Sigmoid colon (tissue), 7 donors: ENCODE measurements at regions of chr2 and their contacts with region 1.

Region 1: DNA sequence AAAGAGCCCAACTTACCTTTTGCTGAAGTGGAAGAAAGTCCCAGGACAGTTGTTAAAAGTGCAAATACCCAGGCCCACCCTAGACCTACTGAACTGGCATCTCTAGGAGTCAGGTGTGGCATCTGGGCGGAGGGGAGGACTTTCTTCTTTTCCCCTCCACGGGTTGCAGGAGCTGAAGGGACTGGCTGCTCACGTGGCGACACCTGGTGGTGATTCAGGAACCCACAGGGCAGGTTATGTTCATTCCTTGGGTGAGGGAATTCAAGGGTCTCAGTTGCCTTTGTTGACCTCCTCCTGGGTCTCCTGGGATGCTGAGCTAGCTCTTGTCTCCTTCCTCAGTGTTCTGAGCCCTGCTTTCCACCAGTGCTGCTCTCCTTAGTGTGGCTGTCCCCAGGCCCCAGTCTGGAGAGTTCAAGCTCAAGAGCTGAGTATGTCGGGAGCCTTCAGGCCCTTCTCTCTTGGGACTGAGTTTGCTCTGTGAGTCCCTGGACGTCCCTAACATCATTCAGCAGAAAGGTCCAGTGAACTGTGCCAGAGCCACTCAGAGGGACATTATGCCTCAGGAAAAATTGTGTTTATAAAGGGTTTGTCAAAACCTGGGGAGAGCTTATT is 56.9 kb downstream of the DYSF start:
- DNase-seq: peak; percentile 78
- H3K4me3 ChIP-seq: no peak overlapping the region
- H3K27ac ChIP-seq: no peak overlapping the region
- H3K4me1 ChIP-seq: peaks cover 0 to 5% (median 2%) of the 10 kb centered on the region in 4 donors
- H3K27me3 ChIP-seq: no peaks in the 10 kb centered on the region
- CTCF ChIP-seq: peak; percentile 85 to 94 (median 90)
- EP300 ChIP-seq: no peak
- POLR2A ChIP-seq: no peak

Region 2: DNA sequence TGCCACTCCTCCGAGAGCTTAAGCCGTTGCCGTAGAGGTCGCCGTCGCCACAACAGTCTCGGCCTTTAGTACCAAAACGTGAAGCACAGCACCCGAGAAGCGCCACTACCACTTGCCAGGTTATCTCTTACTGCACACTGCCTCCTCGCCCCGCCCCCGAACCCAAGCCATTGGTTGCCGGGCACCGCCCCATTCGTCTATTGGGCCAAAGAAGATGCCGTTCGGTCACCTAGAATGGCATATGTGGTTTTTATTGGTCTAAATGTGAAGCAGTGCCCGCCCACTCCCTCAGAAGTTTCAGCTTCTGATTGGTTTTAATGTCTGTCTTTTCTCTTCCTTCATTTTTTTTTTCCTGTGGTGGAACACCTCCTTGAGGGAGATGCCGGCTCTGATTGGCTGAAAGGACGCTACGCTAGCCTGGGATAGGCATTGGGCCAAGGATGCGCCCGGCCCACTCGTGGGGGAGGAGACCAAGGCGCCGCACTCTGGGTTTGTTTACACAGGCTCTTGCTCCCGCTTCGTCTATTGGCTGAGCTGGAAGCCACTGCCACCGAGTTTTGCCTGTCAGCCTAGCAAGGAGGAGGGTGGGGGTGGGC is 283.2 kb before region 1 on chr2 and contains the start of gene PAIP2B:
- intact Hi-C with region 1: loop called (anchors 2 kb)
- DNase-seq: peak; percentile 100
- H3K4me3 ChIP-seq: peak within 1 kb of the TSS; percentile 77 to 97 (median 94)
- H3K27ac ChIP-seq: peak within 1 kb of the TSS; percentile 89 to 96 (median 94)
- H3K4me1 ChIP-seq: peaks cover 0 to 17% (median 6%) of the 10 kb centered on the region in 4 donors
- H3K27me3 ChIP-seq: no peaks in the 10 kb centered on the region
- CTCF ChIP-seq: no peak
- EP300 ChIP-seq: no peak
- POLR2A ChIP-seq: peak; percentile 66 to 83
- total RNA-seq, gene PAIP2B: 8.0 to 13.2 (median 12.4) TPM

Region 3: DNA sequence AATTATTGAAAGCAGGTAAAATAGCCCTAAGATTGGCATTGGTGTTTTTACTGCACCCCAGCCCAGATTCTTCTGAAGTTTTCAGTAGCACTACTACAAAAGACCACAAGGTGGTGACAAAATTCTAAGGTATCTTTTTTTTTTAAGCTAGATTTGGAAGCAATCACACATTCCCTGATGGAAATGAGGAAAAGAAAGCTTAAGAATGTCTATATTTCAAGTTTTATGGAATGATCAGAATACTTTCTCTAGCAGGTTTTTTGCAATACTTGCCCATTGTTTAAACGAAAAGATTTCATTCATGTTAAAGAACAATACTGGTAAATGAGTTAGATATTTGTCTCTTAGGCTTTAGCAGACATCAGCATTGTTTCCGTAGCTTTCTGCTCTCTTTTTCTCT is 210.8 kb before region 1 on chr2:
- intact Hi-C with region 1: loop called (anchors 1 kb)
- DNase-seq: no peak
- H3K4me3 ChIP-seq: no peak overlapping the region
- H3K27ac ChIP-seq: no peak overlapping the region
- H3K4me1 ChIP-seq: no peaks in the 10 kb centered on the region
- H3K27me3 ChIP-seq: no peaks in the 10 kb centered on the region
- CTCF ChIP-seq: peak in 3 of 4 experiments; percentile 40 to 75 (median 55)
- EP300 ChIP-seq: no peak
- POLR2A ChIP-seq: no peak

Region 4: DNA sequence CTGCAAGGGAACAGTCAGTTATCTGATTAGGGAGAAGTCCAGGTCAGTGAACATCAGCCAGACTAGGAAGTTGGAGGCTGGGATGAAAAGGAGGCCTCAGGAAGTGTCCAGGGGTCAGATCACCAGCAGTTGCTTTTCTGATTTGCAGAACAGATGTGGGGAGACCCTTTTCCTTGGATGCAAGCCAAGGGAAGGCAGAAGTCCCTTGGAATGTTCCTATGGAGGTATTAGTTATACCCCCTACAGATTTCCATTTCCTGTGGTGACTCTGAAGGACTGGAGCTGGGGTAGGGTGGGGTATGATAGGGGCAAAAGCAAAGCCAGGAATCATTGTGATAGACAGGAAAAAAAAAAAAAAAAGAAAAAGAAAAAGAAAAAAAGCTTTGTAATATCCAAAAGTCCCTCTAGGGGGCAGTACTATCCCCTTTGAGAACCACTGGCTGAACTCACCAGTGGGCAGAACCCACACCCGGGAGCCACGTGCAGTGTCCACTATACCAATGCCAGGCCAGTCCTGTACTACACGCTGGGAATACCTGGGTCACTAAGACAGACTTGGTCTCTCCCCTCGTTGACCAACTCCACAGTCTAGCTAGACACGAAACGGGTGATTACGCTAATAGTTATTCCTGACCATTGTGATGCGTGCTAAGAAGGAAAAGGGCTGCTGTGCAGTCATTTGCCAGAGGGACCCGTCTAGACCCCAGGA is 49.6 kb before region 1 on chr2:
- intact Hi-C with region 1: loop called (anchors 2 kb)
- DNase-seq: no peak
- H3K4me3 ChIP-seq: no peak overlapping the region
- H3K27ac ChIP-seq: no peak overlapping the region
- H3K4me1 ChIP-seq: peaks cover 0 to 63% (median 51%) of the 10 kb centered on the region in 4 donors
- H3K27me3 ChIP-seq: peaks cover 0 to 5% (median 0%) of the 10 kb centered on the region in 3 donors
- CTCF ChIP-seq: peak in 2 of 4 experiments; percentile 12 to 18
- EP300 ChIP-seq: no peak
- POLR2A ChIP-seq: no peak

Region 5: DNA sequence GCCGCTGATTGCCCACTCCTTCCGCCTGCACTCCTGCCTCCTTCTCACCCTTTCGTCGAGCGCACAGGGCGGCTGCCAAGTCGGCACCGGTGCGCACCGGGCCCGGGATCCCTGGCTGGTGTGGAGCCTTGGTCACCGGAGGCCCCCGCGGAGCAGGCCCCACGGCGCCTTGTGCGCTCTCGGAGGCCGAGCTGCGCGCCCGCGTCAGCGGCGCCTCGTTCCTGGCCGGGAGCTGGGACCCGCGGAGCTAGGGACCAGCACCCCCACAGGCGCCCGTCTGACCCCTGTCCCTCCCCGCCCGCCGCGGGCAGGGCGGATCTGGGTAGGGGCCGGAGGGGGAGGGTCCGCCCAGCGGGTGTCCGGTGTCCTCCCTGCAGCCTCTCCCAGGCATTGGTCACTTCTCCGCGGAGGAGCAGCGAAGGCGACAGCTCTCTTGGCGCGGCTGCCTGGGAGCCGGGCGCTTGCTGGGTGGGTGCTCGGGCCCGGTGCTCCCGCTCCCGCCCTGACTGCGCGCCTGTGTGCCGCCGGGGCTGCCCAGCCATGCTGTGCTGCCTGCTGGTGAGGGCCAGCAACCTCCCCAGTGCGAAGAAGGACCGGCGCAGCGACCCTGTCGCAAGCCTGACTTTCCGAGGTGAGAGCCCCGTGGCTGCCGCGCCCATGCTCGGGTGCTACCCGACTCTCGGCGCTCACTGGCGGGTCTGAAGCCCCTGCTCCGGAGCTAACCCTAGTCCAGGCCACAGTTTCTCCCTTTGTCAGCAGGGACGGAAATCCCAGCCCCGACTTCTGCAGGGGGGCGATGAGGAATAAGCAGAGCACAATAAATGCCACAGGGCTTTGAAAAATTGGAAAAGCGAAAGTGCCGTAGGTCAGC is 43.8 kb before region 1 on chr2:
- intact Hi-C with region 1: loop called (anchors 2 kb)
- DNase-seq: no peak
- H3K4me3 ChIP-seq: peak overlapping the region; percentile 49 to 82 (median 70)
- H3K27ac ChIP-seq: peak overlapping the region; percentile 36 to 70 (median 65)
- H3K4me1 ChIP-seq: peaks cover 0 to 52% (median 26%) of the 10 kb centered on the region in 4 donors
- H3K27me3 ChIP-seq: peaks cover 0 to 5% (median 0%) of the 10 kb centered on the region in 3 donors
- CTCF ChIP-seq: no peak
- EP300 ChIP-seq: no peak
- POLR2A ChIP-seq: no peak